IMR-90 (cell line): ENCODE measurements at regions of chr9 and their contacts with region 1.

Region 1: DNA sequence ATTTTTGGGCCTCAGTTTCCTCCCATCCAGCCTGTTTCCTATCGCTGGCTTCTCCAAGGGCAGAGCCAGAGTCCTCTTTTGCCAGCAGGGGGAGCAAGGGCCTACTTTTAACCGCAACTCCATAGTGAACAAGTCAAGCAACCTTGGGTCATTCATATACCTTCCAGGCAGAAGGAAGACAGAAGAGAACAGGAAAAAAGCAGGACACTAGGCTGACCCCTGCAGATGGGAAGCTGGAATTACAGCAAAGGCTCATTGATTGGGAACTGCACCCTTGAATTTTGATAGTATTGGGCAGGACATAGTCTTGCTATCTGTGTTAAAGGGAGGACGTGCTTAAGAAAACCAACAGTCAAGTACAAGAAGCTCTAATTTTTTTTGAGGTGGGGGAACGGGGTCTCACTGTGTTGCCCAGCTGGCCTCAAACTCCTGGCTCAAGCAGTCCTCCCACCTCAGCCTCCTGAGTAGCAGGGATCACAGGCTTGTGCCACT is 30.1 kb downstream of the QRFP start:
- DNase-seq: peak; percentile 89
- ATAC-seq: peak; percentile 82
- H3K4me3 ChIP-seq: no peak overlapping the region
- H3K27ac ChIP-seq: no peak overlapping the region
- H3K4me1 ChIP-seq: peaks cover 8% of the 10 kb centered on the region
- H3K27me3 ChIP-seq: no peaks in the 10 kb centered on the region
- CTCF ChIP-seq: peak; percentile 88
- POLR2A ChIP-seq: no peak
- RAD21 ChIP-seq: peak; percentile 74

Region 2: GRCh38 chr9:130712564-130713285 is 153.8 kb before region 1 on chr9:
- CTCF ChIA-PET with region 1: interaction called, 9 read pairs
- POLR2A ChIA-PET with region 1: no interaction called
- dilution Hi-C with region 1: no loop called
- in situ Hi-C with region 1: loop called (anchors 5 kb)
- intact Hi-C with region 1: loop called (anchors 1 kb)
- DNase-seq: peak; percentile 98
- ATAC-seq: peak; percentile 97
- H3K4me3 ChIP-seq: peak overlapping the region; percentile 60
- H3K27ac ChIP-seq: peak overlapping the region; percentile 88
- H3K4me1 ChIP-seq: peaks cover 2% of the 10 kb centered on the region; the same call in 1 of the 2 replicates
- H3K27me3 ChIP-seq: no peaks in the 10 kb centered on the region
- CTCF ChIP-seq: no peak
- POLR2A ChIP-seq: peak; percentile 98
- RAD21 ChIP-seq: peak; percentile 3; the same call in 1 of the 2 replicates

Region 3: GRCh38 chr9:130763367-130764200 is 102.9 kb before region 1 on chr9:
- CTCF ChIA-PET with region 1: interaction called, 4 read pairs
- POLR2A ChIA-PET with region 1: interaction called, 12 read pairs
- dilution Hi-C with region 1: no loop called
- in situ Hi-C with region 1: no loop called
- intact Hi-C with region 1: no loop called
- DNase-seq: no peak
- ATAC-seq: no peak
- H3K4me3 ChIP-seq: no peak overlapping the region
- H3K27ac ChIP-seq: no peak overlapping the region
- H3K4me1 ChIP-seq: peaks cover 28% of the 10 kb centered on the region
- H3K27me3 ChIP-seq: no peaks in the 10 kb centered on the region
- CTCF ChIP-seq: no peak
- POLR2A ChIP-seq: no peak
- RAD21 ChIP-seq: no peak

Region 4: DNA sequence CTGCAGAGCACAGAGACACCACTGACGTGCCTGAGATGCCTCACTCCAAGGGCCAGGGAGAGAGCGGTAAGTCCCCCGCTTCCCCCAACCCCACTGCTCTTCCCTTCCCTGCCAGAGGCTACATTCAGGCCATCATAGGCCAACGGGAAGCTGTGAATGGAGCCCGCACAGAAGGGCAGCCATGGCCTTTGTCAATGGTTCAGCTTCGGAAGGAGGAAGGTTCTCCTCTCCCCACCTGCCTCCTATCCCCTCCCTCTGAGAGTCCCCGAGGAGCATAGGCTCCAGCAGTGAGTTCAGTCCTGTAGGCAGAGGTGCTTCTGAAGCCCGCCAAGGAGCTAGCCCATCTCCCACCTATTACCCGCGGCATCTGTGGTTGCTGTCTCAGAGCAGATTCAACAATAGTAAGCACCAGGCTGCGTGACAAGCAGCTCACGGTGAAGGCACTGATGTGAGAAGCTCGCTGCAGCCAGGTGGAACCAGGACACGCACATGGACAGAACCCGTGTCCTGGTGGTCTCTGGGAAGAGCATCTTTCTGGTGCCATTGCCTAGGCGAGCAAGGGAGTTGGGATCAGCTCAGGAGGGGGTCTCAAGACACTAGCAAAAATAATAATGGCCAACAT is 14.2 kb after region 1 on chr9:
- CTCF ChIA-PET with region 1: no interaction called
- POLR2A ChIA-PET with region 1: no interaction called
- dilution Hi-C with region 1: no loop called
- in situ Hi-C with region 1: no loop called
- intact Hi-C with region 1: no loop called
- DNase-seq: no peak
- ATAC-seq: no peak
- H3K4me3 ChIP-seq: no peak overlapping the region
- H3K27ac ChIP-seq: no peak overlapping the region
- H3K4me1 ChIP-seq: no peaks in the 10 kb centered on the region
- H3K27me3 ChIP-seq: no peaks in the 10 kb centered on the region
- CTCF ChIP-seq: no peak
- POLR2A ChIP-seq: no peak
- RAD21 ChIP-seq: no peak

Region 5: DNA sequence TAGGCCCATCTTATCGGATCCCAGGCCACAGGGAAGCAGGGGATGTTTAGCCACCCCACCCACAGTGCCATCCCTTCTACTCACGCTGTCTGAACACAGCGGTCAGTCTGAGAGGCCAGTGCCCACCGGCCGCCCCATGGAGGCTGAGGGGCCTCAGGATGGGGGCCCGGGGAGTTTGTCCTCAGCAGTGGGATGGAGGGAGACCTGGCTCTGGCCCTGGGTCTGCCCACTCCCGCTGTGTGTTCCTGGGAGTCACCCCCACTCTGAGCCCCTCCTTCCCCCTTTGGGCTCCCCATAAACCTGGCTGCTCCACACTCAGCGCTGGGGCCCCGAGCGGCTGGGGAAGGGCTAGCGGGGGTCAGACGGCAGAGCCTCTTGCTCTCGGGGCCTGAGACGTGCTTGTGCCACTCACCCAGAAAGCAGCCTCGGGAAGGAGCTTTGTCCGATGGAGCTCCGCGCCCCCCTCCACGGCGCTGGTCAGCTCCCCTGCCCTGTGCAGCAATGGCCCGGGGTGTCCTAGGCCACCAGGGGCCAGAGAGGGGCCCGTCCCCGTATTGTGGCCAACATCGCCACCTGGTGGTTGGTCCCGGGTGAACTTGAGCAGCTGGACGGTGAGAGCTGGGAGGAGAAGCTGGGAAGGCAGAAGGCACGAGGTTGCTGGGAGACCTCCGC is 131.5 kb after region 1 on chr9:
- CTCF ChIA-PET with region 1: interaction called, 11 read pairs
- POLR2A ChIA-PET with region 1: no interaction called
- dilution Hi-C with region 1: no loop called
- in situ Hi-C with region 1: no loop called
- intact Hi-C with region 1: loop called (anchors 1 kb)
- DNase-seq: peak; percentile 54
- ATAC-seq: peak; percentile 90
- H3K4me3 ChIP-seq: no peak overlapping the region
- H3K27ac ChIP-seq: no peak overlapping the region
- H3K4me1 ChIP-seq: peaks cover 10% of the 10 kb centered on the region; the same call in 1 of the 2 replicates
- H3K27me3 ChIP-seq: peaks cover 25% of the 10 kb centered on the region
- CTCF ChIP-seq: peak; percentile 82
- POLR2A ChIP-seq: no peak
- RAD21 ChIP-seq: peak; percentile 87